ENCODE measurements at regions of chrX and their contacts with region 1.

Region 1: DNA sequence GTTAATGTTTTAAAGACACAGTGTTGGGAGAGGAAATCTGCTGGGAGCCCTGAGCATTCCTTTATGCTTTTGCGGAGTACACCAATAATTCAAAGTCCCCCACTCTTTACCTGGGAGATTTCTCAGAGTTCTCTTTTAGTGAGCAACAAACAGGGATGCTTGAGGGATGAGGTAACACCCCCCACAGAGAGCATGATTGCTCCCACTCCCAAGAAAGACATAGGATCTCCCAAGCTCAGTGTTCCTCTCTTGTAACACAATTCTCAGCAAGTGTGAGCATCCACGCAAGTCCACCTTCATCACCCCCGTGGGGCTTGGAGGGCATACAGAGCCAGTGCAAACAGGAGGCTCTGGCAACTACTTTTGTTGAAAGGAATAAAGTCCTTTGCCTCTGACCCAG is 36.1 kb downstream of the GSPT2 start:
- DNase-seq: no peak
- H3K4me3 ChIP-seq: no peak overlapping the region
- H3K27ac ChIP-seq: no peak overlapping the region
- H3K4me1 ChIP-seq: no peaks in the 10 kb centered on the region
- H3K27me3 ChIP-seq: 0 out of 2 replicates have a peak, but pooled peaks cover under 1% of the 10 kb centered on the region
- CTCF ChIP-seq: no peak

Region 2: GRCh38 chrX:51837921-51838320 is 58.6 kb after region 1 on chrX:
- CTCF ChIA-PET with region 1: no interaction called
- POLR2A ChIA-PET with region 1: no interaction called
- intact Hi-C with region 1: loop called (anchors 10 kb)
- DNase-seq: no peak
- H3K4me3 ChIP-seq: no peak overlapping the region
- H3K27ac ChIP-seq: no peak overlapping the region
- H3K4me1 ChIP-seq: no peaks in the 10 kb centered on the region
- H3K27me3 ChIP-seq: no peaks in the 10 kb centered on the region
- CTCF ChIP-seq: no peak

Measured in PC-9 (cell line).